Psoas muscle (tissue), 8 donors: ENCODE measurements at regions of chr2 and their contacts with region 1.

Region 1: GRCh38 chr2:109510136-109511028 is 103.4 kb downstream of the SEPTIN10 start:
- DNase-seq: peak; percentile 79 to 89
- ATAC-seq: peak; percentile 72 to 85 (median 78)
- H3K4me3 ChIP-seq: no peak overlapping the region
- H3K27ac ChIP-seq: peak overlapping the region; percentile 16
- H3K4me1 ChIP-seq: peaks cover 20% of the 10 kb centered on the region
- H3K27me3 ChIP-seq: no peaks in the 10 kb centered on the region
- CTCF ChIP-seq: peak; percentile 91

Region 2: DNA sequence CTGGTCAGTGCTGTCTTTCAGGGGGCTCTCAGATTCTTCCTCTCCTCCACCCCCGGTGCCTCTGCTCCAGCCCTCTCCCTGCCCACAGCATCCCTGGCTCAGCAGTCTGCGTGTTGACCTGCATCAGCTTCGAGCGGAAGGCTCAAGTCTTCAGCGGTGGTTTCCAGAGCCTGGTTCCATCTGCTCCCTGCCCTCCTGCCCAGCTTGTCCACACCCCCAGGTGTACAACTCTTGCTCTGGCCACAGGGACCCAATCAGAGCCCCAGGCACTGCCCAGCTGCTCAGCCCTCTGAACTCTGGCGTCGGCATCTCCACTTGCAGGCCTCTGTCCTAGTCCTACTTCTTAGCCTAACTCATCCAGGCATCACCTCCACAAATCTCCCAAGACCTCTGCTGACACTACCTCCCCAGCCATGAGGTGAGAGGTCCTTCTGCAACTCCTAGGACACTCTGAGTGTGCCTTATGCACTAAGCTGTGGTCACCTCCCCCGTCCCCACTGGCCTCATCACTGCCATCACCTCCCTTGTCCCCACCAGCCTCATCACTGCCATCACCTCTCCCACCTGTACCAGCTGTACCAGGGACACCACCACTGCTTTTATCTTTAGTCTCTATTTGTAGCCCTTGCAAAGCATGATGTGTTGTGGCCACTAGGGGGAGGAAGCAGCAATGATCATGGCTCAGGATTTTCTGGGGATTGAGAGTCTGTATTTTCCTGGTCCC is 582.3 kb before region 1 on chr2:
- intact Hi-C with region 1: loop called in 1 of 2 experiments (anchors 5 kb)
- DNase-seq: no peak
- ATAC-seq: no peak
- H3K4me3 ChIP-seq: no peak overlapping the region
- H3K27ac ChIP-seq: no peak overlapping the region
- H3K4me1 ChIP-seq: no peaks in the 10 kb centered on the region
- H3K27me3 ChIP-seq: no peaks in the 10 kb centered on the region
- CTCF ChIP-seq: peak; percentile 50

Region 3: GRCh38 chr2:109284826-109285225 is 225.6 kb before region 1 on chr2:
- intact Hi-C with region 1: loop called in 1 of 2 experiments (anchors 2 kb)
- DNase-seq: peak; percentile 57 to 81
- ATAC-seq: peak; percentile 66 to 84 (median 82)
- H3K4me3 ChIP-seq: no peak overlapping the region
- H3K27ac ChIP-seq: peak overlapping the region; percentile 65
- H3K4me1 ChIP-seq: peaks cover 47% of the 10 kb centered on the region
- H3K27me3 ChIP-seq: no peaks in the 10 kb centered on the region
- CTCF ChIP-seq: no peak